ENCODE measurements at regions of chr2 and their contacts with region 1.

Region 1: DNA sequence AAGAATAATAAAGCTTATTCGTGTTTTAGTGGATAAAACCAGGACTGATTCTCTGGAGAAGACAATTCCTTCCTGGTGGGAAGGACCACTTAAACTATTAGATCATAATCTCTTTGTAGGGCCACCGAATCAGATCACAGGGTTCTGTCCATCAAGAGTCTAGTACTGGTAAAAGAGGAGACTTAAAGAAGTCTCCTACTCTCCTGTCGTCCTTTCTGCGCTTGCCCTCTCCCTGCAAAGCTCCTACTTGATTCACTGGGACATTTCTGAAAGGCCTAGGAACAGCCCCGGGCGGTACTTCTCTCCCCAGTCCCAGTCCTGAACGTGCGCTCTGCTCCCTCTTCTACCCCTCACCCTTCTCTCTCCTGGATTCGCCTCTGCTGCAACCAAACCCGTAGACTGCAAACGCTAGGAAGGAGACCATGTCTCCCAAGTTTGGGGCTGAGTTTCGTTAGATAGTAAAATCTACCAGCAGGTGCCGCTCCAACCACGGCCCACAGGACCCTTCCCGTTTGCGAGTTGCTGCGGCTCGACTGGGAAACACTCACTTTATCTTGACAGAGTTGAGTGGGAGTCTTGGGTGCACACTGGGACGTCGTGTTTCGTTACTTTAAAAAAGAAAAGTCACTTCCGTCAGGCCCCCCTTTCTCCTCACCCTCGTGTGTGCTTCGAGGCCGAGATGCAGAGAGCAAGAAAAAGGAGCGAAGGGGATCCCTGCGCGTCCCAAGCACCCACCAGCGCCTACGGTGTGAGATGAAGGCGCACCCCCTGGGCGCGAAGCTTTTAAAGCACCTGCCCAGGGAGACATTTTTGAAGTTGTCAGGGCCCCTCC is 923 bp downstream of the FIGLA start:
- DNase-seq: peak; percentile 63 to 64
- H3K4me3 ChIP-seq: no peak overlapping the region
- H3K4me3 Mint-ChIP-seq: no peak overlapping the region
- H3K27ac Mint-ChIP-seq: no peak overlapping the region
- H3K4me1 ChIP-seq: no peaks in the 10 kb centered on the region
- H3K4me1 Mint-ChIP-seq: no peaks in the 10 kb centered on the region
- H3K27me3 ChIP-seq: 0 out of 2 replicates have a peak, but pooled peaks cover 1% of the 10 kb centered on the region
- H3K27me3 Mint-ChIP-seq: peaks cover 27% of the 10 kb centered on the region
- CTCF ChIP-seq: peak; percentile 71 to 72

Region 2: GRCh38 chr2:70656421-70657010 is 133.0 kb before region 1 on chr2:
- CTCF ChIA-PET with region 1: no interaction called
- POLR2A ChIA-PET with region 1: no interaction called
- intact Hi-C with region 1: loop called (anchors 1 kb)
- DNase-seq: no peak
- H3K4me3 ChIP-seq: no peak overlapping the region
- H3K4me3 Mint-ChIP-seq: no peak overlapping the region
- H3K27ac Mint-ChIP-seq: no peak overlapping the region
- H3K4me1 ChIP-seq: no peaks in the 10 kb centered on the region
- H3K4me1 Mint-ChIP-seq: no peaks in the 10 kb centered on the region
- H3K27me3 ChIP-seq: peaks cover 1% of the 10 kb centered on the region; the same call in 1 of the 2 replicates
- H3K27me3 Mint-ChIP-seq: peaks cover 17% of the 10 kb centered on the region
- CTCF ChIP-seq: no peak

Region 3: DNA sequence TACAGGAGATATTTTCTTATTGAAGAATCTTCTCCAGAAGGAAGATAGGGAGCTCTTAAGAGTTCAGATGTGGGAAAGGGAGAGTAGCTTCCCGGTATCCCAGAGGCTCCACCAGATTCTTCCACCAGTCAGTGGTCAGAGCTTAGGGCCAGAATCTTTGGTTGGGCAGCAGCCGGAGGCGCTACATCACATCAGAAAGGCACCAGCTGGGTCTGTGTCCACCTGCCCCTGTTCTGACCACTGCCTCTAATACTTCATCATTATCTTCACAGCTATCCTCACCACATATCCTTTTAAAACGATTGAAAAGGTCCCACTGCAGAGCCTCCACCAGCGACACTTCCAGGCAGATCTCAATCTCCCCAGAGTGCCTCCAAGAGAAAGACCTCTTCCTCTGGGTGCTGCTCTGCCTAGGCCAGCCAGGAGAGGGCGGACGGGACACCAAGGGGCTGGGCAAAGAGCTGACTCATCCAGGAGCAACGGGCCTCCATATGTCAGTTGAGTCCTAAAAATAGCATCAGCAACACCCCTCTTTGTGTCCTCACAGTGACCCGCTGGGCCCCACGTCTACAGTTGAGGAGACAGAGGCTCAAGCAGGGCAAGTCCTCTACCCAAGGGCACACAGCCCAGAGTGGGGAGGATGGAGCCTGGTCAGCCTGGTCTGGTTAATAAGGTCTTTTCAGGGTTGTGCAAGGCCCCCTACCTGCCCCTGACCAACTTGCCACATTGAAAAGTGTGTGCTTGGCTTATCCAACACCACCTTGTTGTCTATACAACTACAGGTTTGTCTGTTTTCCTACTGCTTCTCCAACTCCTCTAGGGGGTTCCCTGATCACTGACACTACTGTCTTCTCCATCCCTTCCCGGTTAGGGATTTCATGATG is 102.7 kb before region 1 on chr2:
- CTCF ChIA-PET with region 1: no interaction called
- POLR2A ChIA-PET with region 1: no interaction called
- intact Hi-C with region 1: loop called (anchors 1 kb)
- DNase-seq: peak in 1 of 2 experiments; percentile 24
- H3K4me3 ChIP-seq: no peak overlapping the region
- H3K4me3 Mint-ChIP-seq: no peak overlapping the region
- H3K27ac Mint-ChIP-seq: no peak overlapping the region
- H3K4me1 ChIP-seq: no peaks in the 10 kb centered on the region
- H3K4me1 Mint-ChIP-seq: no peaks in the 10 kb centered on the region
- H3K27me3 ChIP-seq: no peaks in the 10 kb centered on the region
- H3K27me3 Mint-ChIP-seq: peaks cover 9% of the 10 kb centered on the region
- CTCF ChIP-seq: peak in 1 of 2 experiments; percentile 48

Region 4: DNA sequence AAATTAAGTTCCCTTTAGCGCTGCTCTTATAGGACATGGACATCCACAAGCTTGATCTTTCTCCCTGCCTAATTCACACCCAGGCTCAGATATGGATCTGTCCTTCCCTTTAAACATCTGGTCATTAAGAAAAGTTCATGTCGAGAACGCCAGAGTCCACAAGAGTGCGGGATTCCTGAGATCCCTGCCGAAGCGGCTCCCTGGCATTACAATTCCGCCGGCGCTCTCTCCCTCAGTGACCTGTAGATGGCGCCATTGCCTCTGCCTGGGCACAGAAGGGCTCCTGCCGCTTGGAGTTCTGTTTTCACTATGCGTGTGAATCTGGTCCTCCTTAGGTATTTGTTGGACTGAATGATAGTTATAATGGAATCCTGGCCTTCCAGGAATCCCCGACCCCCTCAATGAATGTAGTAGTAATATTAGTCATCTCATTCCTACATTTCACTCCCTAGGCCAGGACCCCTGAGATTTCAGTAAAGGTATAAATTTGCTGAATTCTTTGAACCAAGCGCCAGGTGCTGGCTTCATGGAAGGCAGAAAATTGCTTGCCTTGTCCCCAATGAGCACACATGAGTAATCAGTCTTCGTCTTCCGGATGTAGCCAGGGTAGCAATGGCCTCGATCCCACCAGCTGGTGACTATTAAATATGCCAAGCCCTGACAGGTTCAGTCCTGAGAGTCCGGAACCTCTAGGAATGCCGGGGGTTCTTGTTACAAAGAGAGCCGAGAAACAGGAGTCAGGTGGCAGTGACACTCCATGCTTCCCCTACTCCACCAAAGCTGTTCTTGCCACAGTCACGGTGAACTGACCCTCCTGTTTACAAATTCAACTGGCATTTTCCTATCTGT is 72.5 kb after region 1 on chr2:
- CTCF ChIA-PET with region 1: no interaction called
- POLR2A ChIA-PET with region 1: no interaction called
- intact Hi-C with region 1: loop called (anchors 1 kb)
- DNase-seq: peak; percentile 82 to 92
- H3K4me3 ChIP-seq: no peak overlapping the region
- H3K4me3 Mint-ChIP-seq: no peak overlapping the region
- H3K27ac Mint-ChIP-seq: no peak overlapping the region
- H3K4me1 ChIP-seq: no peaks in the 10 kb centered on the region
- H3K4me1 Mint-ChIP-seq: peaks cover 6% of the 10 kb centered on the region
- H3K27me3 ChIP-seq: no peaks in the 10 kb centered on the region; the same call in none of the 2 replicates
- H3K27me3 Mint-ChIP-seq: peaks cover 29% of the 10 kb centered on the region
- CTCF ChIP-seq: peak; percentile 96 to 98

Region 5: DNA sequence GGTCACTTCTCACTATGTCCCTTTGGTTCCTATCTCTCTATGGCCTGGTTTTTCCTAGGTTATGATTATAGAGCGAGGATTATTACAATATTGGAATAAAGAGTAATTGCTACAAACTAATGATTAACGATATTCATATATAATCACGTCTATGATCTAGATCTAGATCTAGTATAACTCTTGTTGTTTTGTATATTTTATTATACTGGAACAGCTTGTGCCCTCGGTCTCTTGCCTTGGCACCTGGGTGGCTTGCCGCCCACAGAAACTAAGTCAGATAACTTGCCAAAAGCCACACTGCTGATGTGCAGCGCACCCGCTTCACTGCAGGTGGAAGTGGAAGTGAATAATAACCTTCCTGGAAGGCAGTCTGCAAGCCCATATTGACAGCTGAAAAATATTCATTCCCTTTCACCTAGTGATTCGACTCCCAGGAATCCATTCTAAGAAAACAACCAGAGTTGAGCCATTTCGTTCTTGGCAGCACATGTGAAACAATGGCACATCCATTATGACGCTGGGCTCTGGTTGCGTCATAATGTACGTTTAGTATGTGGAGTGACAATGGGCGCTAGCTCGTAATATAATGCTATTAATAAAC is 188.2 kb after region 1 on chr2:
- CTCF ChIA-PET with region 1: no interaction called
- POLR2A ChIA-PET with region 1: no interaction called
- intact Hi-C with region 1: loop called (anchors 5 kb)
- DNase-seq: no peak
- H3K4me3 ChIP-seq: no peak overlapping the region
- H3K4me3 Mint-ChIP-seq: peak overlapping the region; percentile 75
- H3K27ac Mint-ChIP-seq: no peak overlapping the region
- H3K4me1 ChIP-seq: peaks cover 10% of the 10 kb centered on the region; the same call in 1 of the 2 replicates
- H3K4me1 Mint-ChIP-seq: peaks cover 7% of the 10 kb centered on the region
- H3K27me3 ChIP-seq: no peaks in the 10 kb centered on the region
- H3K27me3 Mint-ChIP-seq: no peaks in the 10 kb centered on the region
- CTCF ChIP-seq: no peak